PC-9 (cell line): ENCODE measurements at regions of chr3 and their contacts with region 1.

Region 1: DNA sequence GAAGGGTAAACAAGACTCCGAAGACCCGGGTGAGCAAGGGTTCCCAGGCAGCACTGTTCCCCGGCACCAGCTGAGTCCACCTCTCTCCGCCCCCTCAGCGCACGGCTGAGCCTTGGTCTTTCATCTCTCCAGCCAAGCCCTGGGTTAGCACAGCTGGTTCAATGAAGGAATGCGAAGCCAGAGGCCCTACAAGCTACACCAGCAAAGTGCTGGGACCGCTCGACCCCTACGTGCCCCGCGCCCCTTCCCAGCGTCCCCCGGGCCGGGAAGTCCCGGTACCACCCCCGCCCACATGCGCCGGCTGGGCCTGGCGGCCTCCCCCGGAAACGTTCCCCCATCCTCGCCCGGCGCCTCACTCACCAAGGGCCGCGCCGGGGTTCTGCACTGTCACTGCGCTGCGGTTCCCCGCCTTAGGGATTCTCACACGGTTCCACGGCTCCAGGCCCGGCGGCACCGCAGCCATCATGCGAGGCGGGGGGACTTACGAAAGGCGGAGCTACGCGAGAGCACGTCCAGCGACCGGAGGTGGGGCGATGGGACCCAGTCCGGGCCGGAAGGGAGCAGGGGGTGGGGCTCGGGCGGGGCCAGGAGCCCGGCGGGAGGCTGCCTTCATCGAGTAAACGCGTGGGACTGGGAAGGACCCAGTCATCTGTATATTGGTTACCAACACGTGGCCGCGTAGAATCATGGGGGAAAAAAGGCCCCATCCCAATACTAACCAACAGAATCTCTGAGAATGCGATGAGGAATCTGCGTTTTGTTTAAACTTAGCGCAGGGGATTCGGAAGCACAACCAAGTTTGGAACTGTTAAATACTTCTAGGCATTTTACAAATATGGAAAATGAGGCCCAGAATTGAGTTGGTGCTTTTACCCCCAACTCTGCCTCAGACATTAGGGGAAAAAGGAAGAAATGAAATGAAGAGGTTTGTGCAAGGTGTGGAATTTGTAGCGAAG is 28.7 kb downstream of the GTPBP8 start:
- DNase-seq: peak; percentile 80 to 81
- H3K4me3 ChIP-seq: peak overlapping the region; percentile 87
- H3K27ac ChIP-seq: peak overlapping the region; percentile 76
- H3K4me1 ChIP-seq: peaks cover 14% of the 10 kb centered on the region
- H3K27me3 ChIP-seq: no peaks in the 10 kb centered on the region
- CTCF ChIP-seq: no peak

Region 2: GRCh38 chr3:112568642-112569041 is 450.8 kb before region 1 on chr3:
- CTCF ChIA-PET with region 1: no interaction called
- POLR2A ChIA-PET with region 1: interaction called, 15 read pairs
- intact Hi-C with region 1: no loop called
- DNase-seq: no peak
- H3K4me3 ChIP-seq: no peak overlapping the region
- H3K27ac ChIP-seq: no peak overlapping the region
- H3K4me1 ChIP-seq: peaks cover under 1% of the 10 kb centered on the region
- H3K27me3 ChIP-seq: no peaks in the 10 kb centered on the region
- CTCF ChIP-seq: no peak

Region 3: GRCh38 chr3:112629425-112629824 is 390.0 kb before region 1 on chr3:
- CTCF ChIA-PET with region 1: no interaction called
- POLR2A ChIA-PET with region 1: interaction called, 11 read pairs
- intact Hi-C with region 1: no loop called
- DNase-seq: peak in 1 of 2 experiments; percentile 43
- H3K4me3 ChIP-seq: no peak overlapping the region
- H3K27ac ChIP-seq: no peak overlapping the region
- H3K4me1 ChIP-seq: peaks cover 19% of the 10 kb centered on the region
- H3K27me3 ChIP-seq: no peaks in the 10 kb centered on the region
- CTCF ChIP-seq: no peak

Region 4: DNA sequence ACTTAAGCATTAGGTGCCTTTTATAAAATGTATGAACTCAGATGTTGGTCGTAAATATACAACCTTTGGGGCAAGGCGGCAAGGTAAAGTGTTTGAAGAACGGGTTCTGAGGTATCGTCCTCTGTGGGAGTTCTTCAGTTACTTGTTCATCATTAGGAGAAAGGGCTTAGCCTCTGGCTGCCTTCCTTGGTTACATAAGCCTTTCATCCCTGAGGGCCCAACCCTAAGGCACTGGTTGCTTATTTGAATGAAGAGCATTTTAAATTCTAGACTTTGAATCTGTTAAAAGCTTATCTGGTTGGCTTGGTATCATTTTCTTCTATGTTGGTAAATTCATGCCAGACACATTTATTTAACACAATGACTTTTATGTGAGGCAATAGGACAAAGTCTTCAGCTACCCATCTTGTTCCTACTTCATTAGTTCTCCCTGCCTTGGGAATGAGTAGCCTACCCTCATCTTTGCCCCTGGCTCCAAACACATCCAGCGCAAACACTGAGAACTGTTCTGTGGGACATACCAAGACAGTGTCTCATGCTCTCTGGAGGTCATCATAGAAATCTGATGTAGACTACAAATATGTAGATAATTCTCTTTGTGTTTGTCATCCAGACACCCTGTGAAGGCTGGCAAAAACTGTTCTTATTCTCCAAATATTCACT is 366.1 kb before region 1 on chr3:
- CTCF ChIA-PET with region 1: interaction called, 11 read pairs
- POLR2A ChIA-PET with region 1: no interaction called
- intact Hi-C with region 1: no loop called
- DNase-seq: peak; percentile 76 to 96
- H3K4me3 ChIP-seq: no peak overlapping the region
- H3K27ac ChIP-seq: peak overlapping the region; percentile 92
- H3K4me1 ChIP-seq: peaks cover 55% of the 10 kb centered on the region
- H3K27me3 ChIP-seq: no peaks in the 10 kb centered on the region
- CTCF ChIP-seq: no peak

Region 5: DNA sequence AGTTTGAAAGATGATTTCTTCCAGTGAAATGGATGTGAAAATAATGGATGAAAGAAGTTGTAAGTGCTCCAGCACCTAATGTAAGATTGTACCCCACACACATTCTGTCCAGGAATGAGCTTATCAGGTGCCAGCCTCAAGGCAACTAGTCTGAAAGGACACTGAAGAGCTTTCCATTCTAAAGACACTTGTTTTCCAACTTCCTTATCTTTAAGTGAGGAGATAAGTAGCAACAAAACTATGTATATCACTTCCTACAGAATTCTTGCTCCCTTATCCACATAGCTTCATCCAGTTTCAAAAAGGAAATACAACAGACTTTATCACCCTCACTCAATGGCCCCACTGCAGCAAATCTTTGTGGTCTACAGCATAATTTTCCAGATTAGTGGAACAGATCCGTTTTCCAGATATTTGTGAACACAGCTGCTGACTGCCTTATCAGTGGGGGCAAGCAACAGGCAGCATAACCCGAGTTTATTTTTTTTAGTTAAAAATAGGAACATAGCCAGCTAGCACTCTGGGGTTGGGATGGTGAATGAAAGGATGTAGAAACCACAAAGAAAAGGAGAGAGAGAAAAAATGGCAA is 233.4 kb before region 1 on chr3:
- CTCF ChIA-PET with region 1: interaction called, 11 read pairs
- POLR2A ChIA-PET with region 1: no interaction called
- intact Hi-C with region 1: no loop called
- DNase-seq: no peak
- H3K4me3 ChIP-seq: no peak overlapping the region
- H3K27ac ChIP-seq: no peak overlapping the region
- H3K4me1 ChIP-seq: peaks cover 3% of the 10 kb centered on the region
- H3K27me3 ChIP-seq: no peaks in the 10 kb centered on the region
- CTCF ChIP-seq: no peak

Region 6: GRCh38 chr3:112990672-112991602 is 28.5 kb before region 1 on chr3 and contains the start of gene GTPBP8:
- CTCF ChIA-PET with region 1: no interaction called
- POLR2A ChIA-PET with region 1: interaction called, 11 read pairs
- intact Hi-C with region 1: no loop called
- DNase-seq: peak; percentile 87 to 90
- H3K4me3 ChIP-seq: peak within 1 kb of the TSS; percentile 95
- H3K27ac ChIP-seq: peak within 1 kb of the TSS; percentile 98
- H3K4me1 ChIP-seq: peaks cover 29% of the 10 kb centered on the region
- H3K27me3 ChIP-seq: no peaks in the 10 kb centered on the region
- CTCF ChIP-seq: peak; percentile 25; the same call in 1 of the 2 replicates
- total RNA-seq, gene GTPBP8: 27.9 and 34.3 TPM in 2 replicates

Region 7: GRCh38 chr3:113329757-113330156 is 310.3 kb after region 1 on chr3:
- CTCF ChIA-PET with region 1: no interaction called
- POLR2A ChIA-PET with region 1: no interaction called
- intact Hi-C with region 1: no loop called
- DNase-seq: no peak
- H3K4me3 ChIP-seq: no peak overlapping the region
- H3K27ac ChIP-seq: no peak overlapping the region
- H3K4me1 ChIP-seq: no peaks in the 10 kb centered on the region
- H3K27me3 ChIP-seq: no peaks in the 10 kb centered on the region
- CTCF ChIP-seq: no peak

Region 8: GRCh38 chr3:113501597-113501996 is 482.1 kb after region 1 on chr3:
- CTCF ChIA-PET with region 1: no interaction called
- POLR2A ChIA-PET with region 1: interaction called, 23 read pairs
- intact Hi-C with region 1: no loop called
- DNase-seq: no peak
- H3K4me3 ChIP-seq: no peak overlapping the region
- H3K27ac ChIP-seq: no peak overlapping the region
- H3K4me1 ChIP-seq: peaks cover 7% of the 10 kb centered on the region
- H3K27me3 ChIP-seq: no peaks in the 10 kb centered on the region
- CTCF ChIP-seq: no peak